ENCODE measurements at regions of chr1 and their contacts with region 1.

Region 1: GRCh38 chr1:236904874-236905741 is 99.1 kb downstream of the MT1HL1 start:
- DNase-seq: no peak
- H3K4me3 ChIP-seq: no peak overlapping the region
- H3K27ac ChIP-seq: no peak overlapping the region
- H3K4me1 ChIP-seq: no peaks in the 10 kb centered on the region
- H3K27me3 ChIP-seq: no peaks in the 10 kb centered on the region
- CTCF ChIP-seq: no peak
- EP300 ChIP-seq: no peak
- POLR2A ChIP-seq: no peak
- RAD21 ChIP-seq: no peak

Region 2: DNA sequence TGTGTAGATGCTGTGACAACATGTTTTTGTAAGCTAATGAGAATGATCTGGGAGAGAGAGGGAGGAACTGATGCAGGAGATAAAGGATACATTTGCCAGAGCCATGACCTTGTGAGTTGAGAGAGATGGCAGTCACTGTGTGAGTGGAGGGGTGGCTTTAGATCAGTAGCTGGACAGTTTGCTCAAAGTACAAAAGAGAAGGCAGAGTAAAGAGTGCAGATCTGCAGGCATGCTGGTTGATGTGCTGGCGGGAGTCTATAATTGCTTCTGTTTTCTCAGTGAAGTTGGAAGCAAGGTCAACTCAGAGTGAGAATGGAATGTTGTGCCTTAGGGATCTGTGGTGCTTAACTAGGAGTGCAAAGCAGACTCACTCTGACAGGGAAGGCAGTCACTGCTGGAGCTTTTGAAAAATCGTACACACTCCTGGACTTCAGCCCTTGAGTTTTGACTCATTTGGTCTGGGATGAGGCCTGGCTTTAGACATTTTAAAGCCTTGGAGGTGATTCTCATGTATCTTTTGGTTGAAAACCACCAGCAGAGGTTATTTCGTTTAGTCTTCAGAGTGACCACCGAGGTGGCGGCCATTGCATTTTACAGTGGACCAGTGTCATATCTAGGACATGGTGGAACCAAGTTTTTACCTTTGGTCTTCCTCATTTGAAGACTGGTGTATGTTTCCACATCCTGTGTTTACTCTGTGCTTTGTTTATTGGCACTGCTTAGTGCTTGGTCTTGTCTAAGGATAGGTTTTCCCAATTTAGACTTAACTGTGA is 60.4 kb before region 1 on chr1:
- CTCF ChIA-PET with region 1: interaction called, 10 read pairs
- POLR2A ChIA-PET with region 1: no interaction called
- DNase-seq: no peak
- H3K4me3 ChIP-seq: no peak overlapping the region
- H3K27ac ChIP-seq: no peak overlapping the region
- H3K4me1 ChIP-seq: no peaks in the 10 kb centered on the region
- H3K27me3 ChIP-seq: no peaks in the 10 kb centered on the region
- CTCF ChIP-seq: no peak
- EP300 ChIP-seq: no peak
- POLR2A ChIP-seq: no peak
- RAD21 ChIP-seq: no peak

Region 3: DNA sequence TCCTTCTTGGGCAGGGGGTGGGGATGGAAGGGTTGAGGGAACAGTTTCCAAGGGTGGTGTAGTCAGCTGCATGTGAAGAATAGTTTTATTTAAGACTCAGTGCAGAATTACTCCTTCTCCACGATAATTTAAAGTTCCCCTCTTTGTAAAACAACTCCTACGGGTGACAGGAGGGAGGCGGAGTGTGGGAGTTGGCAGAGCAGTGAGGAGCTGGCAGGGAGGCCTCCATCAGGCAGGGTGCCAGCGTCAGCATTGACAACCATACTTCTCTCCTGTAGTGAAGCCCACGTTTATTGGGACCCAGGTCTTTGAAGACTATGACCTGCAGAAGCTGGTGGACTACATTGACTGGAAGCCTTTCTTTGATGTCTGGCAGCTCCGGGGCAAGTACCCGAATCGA is 16.2 kb before region 1 on chr1:
- CTCF ChIA-PET with region 1: no interaction called
- POLR2A ChIA-PET with region 1: no interaction called
- DNase-seq: no peak
- H3K4me3 ChIP-seq: no peak overlapping the region
- H3K27ac ChIP-seq: no peak overlapping the region
- H3K4me1 ChIP-seq: no peaks in the 10 kb centered on the region
- H3K27me3 ChIP-seq: no peaks in the 10 kb centered on the region
- CTCF ChIP-seq: no peak
- EP300 ChIP-seq: no peak
- POLR2A ChIP-seq: no peak
- RAD21 ChIP-seq: no peak

Measured in H1 (cell line).